Sigmoid colon (tissue), 7 donors: ENCODE measurements at regions of chr3 and their contacts with region 1.

Region 1: GRCh38 chr3:105518806-105519418 is 152.2 kb downstream of the ALCAM start:
- DNase-seq: no peak
- H3K4me3 ChIP-seq: no peak overlapping the region
- H3K27ac ChIP-seq: no peak overlapping the region
- H3K4me1 ChIP-seq: peaks cover 0 to 6% (median 0%) of the 10 kb centered on the region in 4 donors
- H3K27me3 ChIP-seq: no peaks in the 10 kb centered on the region
- CTCF ChIP-seq: peak; percentile 16 to 68 (median 44)
- EP300 ChIP-seq: no peak
- POLR2A ChIP-seq: no peak

Region 2: DNA sequence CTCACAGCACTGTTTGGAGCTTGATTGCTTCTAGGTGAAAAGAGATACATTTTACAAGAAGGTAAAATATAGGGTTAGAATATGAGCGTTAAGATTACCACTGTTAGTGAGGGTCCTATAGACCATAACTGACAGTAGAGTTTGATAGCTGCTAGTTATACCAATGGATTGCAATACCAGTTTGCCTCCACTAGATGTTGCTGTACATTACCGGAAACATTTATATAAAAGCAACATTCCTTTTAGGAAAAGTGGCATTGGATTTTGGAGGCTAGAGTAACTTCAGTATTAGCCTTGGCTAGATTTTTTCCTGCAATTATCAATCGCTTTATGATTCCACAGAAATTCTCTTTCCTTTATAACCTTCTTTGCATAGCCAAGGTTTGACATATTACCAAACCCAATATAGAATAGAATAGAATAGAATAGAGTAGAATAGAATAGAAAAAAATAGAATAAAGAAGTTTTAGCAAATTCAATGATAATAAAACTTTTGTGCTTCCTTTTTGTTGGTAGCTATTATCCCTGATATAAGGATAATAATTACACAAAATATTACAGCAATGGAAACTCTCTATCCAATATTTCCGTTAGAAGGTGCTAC is 1245.8 kb before region 1 on chr3:
- intact Hi-C with region 1: loop called (anchors 10 kb)
- DNase-seq: no peak
- H3K4me3 ChIP-seq: no peak overlapping the region
- H3K27ac ChIP-seq: no peak overlapping the region
- H3K4me1 ChIP-seq: no peaks in the 10 kb centered on the region
- H3K27me3 ChIP-seq: no peaks in the 10 kb centered on the region
- CTCF ChIP-seq: peak in 3 of 4 experiments; percentile 43 to 73 (median 65)
- EP300 ChIP-seq: no peak
- POLR2A ChIP-seq: no peak

Region 3: GRCh38 chr3:104731074-104731473 is 787.8 kb before region 1 on chr3:
- intact Hi-C with region 1: no loop called
- DNase-seq: no peak
- H3K4me3 ChIP-seq: no peak overlapping the region
- H3K27ac ChIP-seq: no peak overlapping the region
- H3K4me1 ChIP-seq: no peaks in the 10 kb centered on the region
- H3K27me3 ChIP-seq: no peaks in the 10 kb centered on the region
- CTCF ChIP-seq: no peak
- EP300 ChIP-seq: no peak
- POLR2A ChIP-seq: no peak

Region 4: DNA sequence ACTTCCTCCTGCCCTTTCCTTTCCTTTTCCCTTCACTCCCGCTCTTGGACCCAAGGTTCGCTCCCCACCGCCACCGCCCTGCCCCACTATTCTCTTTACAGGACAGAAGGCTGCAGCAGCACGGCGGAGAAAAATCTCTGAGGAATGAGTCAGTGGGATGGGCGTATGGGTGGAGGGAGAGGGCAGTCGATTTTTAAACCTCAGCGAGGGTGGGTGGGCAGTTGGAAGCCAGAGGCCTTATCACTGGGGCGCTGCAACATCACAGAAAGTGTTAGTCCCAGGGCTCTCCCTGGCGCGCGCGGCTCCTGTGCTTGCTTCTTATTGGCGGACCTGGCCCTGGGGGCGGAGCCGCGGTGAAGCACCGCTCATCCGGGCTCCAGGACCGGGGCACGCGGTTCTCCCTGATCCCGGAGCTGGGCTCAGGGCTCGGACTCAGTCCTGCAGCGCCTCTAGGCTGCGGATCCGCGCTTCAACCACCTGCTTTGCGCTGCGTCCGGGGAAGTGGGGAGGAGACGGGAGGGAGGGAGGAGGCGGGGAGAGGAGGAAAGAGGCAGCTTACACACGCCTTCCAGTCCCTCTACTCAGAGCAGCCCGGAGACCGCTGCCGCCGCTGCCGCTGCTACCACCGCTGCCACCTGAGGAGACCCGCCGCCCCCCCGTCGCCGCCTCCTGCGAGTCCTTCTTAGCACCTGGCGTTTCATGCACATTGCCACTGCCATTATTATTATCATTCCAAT is 152.4 kb before region 1 on chr3 and contains the start of gene ALCAM:
- intact Hi-C with region 1: loop called (anchors 5 kb)
- DNase-seq: peak; percentile 95
- H3K4me3 ChIP-seq: peak within 1 kb of the TSS; percentile 48 to 62 (median 61)
- H3K27ac ChIP-seq: peak within 1 kb of the TSS; percentile 63 to 85 (median 74)
- H3K4me1 ChIP-seq: peaks cover 0 to 38% (median 18%) of the 10 kb centered on the region in 4 donors
- H3K27me3 ChIP-seq: no peaks in the 10 kb centered on the region
- CTCF ChIP-seq: peak in 3 of 4 experiments; percentile 17 to 39 (median 39)
- EP300 ChIP-seq: no peak
- POLR2A ChIP-seq: peak; percentile 65 to 79
- total RNA-seq, gene ALCAM: 16.0 to 45.1 (median 32.9) TPM